ENCODE measurements at regions of chr1 and their contacts with region 1.

Region 1: GRCh38 chr1:27556781-27557595 is 47.0 kb downstream of the AHDC1 start:
- DNase-seq: peak; percentile 91
- CTCF ChIP-seq: peak; percentile 85

Region 2: DNA sequence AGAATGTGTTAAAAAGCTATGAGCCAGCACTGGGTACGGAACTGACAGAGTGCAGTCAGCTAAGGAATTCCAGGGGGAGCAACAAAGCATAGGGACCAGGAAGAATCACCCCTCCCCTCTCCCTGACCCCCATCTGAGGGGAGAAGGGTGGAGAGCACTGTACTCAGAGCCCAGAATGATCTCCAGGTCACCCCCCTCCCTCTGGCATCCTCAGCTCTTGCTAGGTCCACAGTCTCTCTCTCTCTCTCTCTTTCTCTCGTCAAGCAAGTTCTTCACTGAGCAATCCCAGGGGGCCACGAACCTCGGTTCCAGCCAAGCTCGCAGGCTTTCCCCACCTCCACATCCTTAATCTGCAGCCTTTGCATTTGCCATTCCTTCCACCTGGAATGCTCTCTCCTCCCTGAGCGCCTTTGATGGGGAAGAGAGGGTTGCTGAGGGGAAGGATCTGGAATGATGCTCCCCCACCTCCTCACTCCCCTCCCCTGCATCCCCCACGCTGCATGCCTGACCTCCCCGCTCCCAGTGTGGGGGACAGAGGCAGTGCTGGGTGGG is 60.3 kb before region 1 on chr1:
- CTCF ChIA-PET with region 1: interaction called, 10 read pairs
- POLR2A ChIA-PET with region 1: no interaction called
- DNase-seq: no peak
- CTCF ChIP-seq: no peak

Region 3: DNA sequence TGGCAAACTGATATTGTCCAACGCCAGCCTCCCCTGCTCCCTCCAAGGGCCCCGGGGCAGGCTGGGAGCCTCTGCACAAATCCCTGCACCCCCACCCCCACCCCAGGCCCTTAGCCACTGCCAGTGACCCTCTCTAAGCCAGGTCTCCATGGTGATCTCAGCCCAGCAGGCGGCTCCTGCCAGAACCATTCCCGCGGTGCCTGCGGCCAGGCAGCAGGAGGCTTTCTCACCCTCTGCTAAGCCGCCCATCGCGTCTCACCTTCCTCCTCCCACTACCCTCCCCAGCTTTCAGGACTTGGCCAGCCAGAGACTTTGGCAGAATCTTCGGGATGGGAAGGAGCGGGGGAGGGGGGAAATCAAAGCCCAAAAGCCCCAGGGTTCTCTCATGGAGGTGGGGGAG is 20.2 kb before region 1 on chr1:
- CTCF ChIA-PET with region 1: interaction called, 83 read pairs
- POLR2A ChIA-PET with region 1: no interaction called
- DNase-seq: no peak
- CTCF ChIP-seq: no peak

Region 4: GRCh38 chr1:27568300-27569087 is 11.5 kb after region 1 on chr1:
- CTCF ChIA-PET with region 1: interaction called, 163 read pairs
- POLR2A ChIA-PET with region 1: no interaction called
- DNase-seq: peak; percentile 98
- CTCF ChIP-seq: peak; percentile 64

Region 5: DNA sequence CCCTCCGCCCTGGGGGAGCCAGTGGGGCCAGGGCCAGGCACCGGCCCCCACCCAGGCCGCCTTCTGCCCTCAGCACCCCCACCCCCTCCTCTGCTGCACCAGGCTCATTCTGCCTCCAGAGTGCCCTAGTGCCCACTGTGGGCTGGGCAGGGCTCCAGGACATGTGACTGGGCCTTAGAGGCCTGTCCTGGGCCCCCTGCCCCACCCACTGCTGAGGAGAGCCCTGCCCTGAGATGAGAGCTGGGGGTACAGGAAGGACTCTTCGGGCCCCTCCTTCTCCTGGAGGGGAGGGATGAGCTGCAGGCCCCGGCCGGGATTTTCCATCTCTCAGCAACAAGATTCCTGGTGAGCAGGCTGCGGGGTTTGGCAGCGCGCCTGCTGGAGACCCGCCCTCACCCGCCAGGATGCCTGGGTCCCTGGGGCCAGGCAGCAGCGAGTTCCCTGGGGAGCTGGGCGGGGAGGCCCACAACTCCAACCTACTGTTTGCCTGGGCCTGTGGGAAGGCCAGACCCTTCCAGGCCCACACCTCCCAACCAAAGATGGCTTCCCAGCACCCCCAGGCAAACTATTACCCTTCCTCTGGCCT is 32.9 kb after region 1 on chr1:
- CTCF ChIA-PET with region 1: interaction called, 82 read pairs
- POLR2A ChIA-PET with region 1: no interaction called
- DNase-seq: no peak
- CTCF ChIP-seq: no peak

Measured in GM10248 (cell line).